ENCODE measurements at regions of chr2 and their contacts with region 1.

Region 1: DNA sequence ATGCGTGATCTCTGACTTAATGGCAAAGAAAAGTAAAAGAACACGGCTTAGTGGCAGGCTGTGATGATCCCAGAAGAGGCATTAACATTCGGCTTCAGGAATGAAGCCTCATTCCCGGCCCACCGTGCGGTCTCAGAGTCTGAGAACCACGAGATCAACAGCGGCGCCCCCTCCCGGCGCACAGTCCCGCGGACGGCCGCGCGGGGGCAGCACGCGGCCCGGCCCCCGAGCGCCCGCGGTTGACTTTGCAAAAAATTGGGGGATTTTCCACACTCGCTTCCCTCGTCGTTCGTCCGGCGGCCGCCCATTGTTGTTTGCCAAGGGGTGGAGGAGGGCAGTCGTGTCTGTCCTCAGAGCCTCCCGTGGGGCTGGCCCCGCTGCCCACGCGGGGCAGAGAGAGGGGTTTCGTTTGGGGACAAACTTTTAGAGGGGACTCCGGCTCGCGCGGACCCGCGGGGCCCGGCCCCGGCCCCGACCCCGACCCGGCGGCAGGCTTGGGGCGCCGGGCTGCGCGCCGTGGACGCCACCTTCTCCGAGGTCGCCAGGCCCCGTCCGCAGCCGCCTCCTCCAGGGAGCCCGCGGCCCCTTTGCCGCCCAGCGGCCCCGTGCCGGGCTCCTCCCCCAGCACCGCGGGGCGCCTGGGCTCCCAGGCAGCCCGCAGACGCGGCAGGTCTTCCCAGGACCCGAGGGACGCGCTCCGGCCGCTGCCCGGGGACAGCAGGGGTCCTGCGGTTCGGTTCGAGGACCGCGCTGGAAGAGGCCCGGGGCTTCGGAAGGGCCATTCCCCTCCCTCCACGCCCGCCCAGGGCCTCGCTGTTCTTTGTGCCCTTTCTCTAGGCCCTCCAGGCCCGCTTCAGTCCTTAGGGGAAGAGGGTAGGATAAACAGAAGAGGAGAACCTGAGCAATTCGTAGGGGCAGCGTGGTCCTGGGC is 3.4 kb upstream of the HS6ST1 start:
- DNase-seq: peak; percentile 84
- H3K4me3 Mint-ChIP-seq: peak overlapping the region; percentile 52
- H3K27ac Mint-ChIP-seq: no peak overlapping the region
- H3K4me1 Mint-ChIP-seq: peaks cover 11% of the 10 kb centered on the region
- H3K27me3 Mint-ChIP-seq: no peaks in the 10 kb centered on the region

Region 2: GRCh38 chr2:127857265-127857808 is 464.7 kb before region 1 on chr2:
- CTCF ChIA-PET with region 1: no interaction called
- intact Hi-C with region 1: loop called (anchors 10 kb)
- DNase-seq: peak; percentile 32
- H3K4me3 Mint-ChIP-seq: peak overlapping the region; percentile 99
- H3K27ac Mint-ChIP-seq: peak overlapping the region; percentile 91
- H3K4me1 Mint-ChIP-seq: peaks cover 53% of the 10 kb centered on the region
- H3K27me3 Mint-ChIP-seq: no peaks in the 10 kb centered on the region

Region 3: GRCh38 chr2:127984213-127984950 is 337.7 kb before region 1 on chr2:
- CTCF ChIA-PET with region 1: no interaction called
- intact Hi-C with region 1: no loop called
- DNase-seq: no peak
- H3K4me3 Mint-ChIP-seq: no peak overlapping the region
- H3K27ac Mint-ChIP-seq: no peak overlapping the region
- H3K4me1 Mint-ChIP-seq: no peaks in the 10 kb centered on the region
- H3K27me3 Mint-ChIP-seq: no peaks in the 10 kb centered on the region

Region 4: DNA sequence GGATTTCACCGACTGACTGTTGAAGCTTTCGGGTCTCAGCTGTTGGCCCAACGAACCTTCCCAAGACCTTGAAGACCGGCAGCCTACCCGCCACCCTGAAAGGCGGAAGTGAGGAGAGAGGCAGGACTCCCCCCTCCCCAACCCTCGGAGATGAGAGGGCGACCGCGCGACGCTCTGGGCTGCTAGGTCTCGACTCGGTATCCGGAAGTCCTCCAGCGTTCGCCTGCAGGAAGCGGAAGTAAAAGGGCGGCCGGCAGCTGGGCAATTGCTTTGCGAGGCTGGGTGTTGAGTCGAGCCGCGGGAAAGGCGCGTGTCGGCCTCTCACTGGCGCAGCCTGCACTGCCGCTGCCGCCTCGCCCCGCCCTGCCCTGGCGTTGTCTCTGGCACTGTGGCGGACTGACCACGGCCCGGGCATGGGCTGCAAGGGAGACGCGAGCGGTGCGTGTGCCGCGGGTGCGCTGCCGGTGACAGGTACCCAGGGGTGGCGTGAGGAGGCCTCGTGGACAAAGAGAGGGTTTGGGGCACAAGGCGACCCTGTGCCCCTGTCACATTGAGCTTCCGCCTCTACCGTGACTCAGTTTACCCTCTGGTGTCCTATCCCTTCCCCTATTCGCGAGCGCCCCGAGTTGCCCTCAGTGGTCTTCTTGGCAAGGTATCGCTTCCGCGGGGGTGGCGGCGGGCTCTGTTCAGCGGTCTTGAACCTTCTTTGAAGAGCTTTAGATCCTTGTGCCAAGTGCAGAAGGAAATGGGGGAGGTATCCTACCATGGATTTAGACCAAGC is 230.9 kb before region 1 on chr2 and contains the start of gene UGGT1:
- CTCF ChIA-PET with region 1: no interaction called
- intact Hi-C with region 1: loop called (anchors 2 kb)
- DNase-seq: peak; percentile 96
- H3K4me3 Mint-ChIP-seq: peak within 1 kb of the TSS; percentile 90
- H3K27ac Mint-ChIP-seq: peak within 1 kb of the TSS; percentile 86
- H3K4me1 Mint-ChIP-seq: peaks cover 42% of the 10 kb centered on the region
- H3K27me3 Mint-ChIP-seq: no peaks in the 10 kb centered on the region
- total RNA-seq, gene UGGT1: 37.3 to 40.1 TPM

Region 5: DNA sequence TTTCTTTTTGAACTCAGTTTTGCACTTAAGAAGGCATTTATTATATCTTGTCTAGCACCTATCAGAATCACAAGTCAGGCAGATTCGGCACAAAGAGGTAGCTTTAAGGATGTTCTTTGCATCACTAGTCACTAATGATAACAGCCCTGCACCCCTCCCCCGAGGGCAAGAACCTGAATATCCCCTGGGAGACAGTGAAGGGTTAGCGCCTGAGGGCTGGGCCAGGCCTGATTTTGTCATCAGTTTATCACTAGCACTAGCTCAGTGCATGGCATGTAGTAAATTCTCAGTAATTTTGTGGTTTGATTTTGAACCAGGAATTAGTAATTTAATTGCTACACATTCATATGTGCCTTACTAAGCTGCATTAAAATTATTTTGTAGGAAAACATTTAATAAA is 20.5 kb after region 1 on chr2:
- CTCF ChIA-PET with region 1: no interaction called
- intact Hi-C with region 1: no loop called
- DNase-seq: no peak
- H3K4me3 Mint-ChIP-seq: no peak overlapping the region
- H3K27ac Mint-ChIP-seq: no peak overlapping the region
- H3K4me1 Mint-ChIP-seq: no peaks in the 10 kb centered on the region
- H3K27me3 Mint-ChIP-seq: no peaks in the 10 kb centered on the region

Region 6: DNA sequence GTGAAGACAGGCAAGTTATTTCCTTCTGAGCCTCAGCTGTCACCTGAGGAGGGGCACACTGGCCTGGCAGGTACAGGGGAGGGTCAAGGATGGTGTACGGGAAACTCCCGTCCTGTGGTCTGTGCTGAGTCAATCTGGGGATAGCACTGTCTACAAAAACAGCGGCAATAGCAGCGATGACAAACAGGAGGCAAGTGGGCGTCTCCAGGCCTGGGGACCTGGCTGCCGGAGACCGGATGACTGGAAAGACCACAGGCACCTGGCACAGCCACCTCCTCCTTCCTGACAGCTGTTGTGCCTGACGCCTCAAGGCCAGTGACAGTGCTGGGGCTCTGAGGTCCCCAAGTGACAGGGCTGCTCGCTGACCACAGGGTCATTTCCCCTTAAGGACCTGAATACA is 198.7 kb after region 1 on chr2:
- CTCF ChIA-PET with region 1: no interaction called
- intact Hi-C with region 1: loop called (anchors 5 kb)
- DNase-seq: peak; percentile 75
- H3K4me3 Mint-ChIP-seq: no peak overlapping the region
- H3K27ac Mint-ChIP-seq: no peak overlapping the region
- H3K4me1 Mint-ChIP-seq: peaks cover 3% of the 10 kb centered on the region
- H3K27me3 Mint-ChIP-seq: peaks cover 4% of the 10 kb centered on the region

Region 7: GRCh38 chr2:128754246-128754724 is 432.2 kb after region 1 on chr2:
- CTCF ChIA-PET with region 1: no interaction called
- intact Hi-C with region 1: loop called (anchors 2 kb)
- DNase-seq: no peak
- H3K4me3 Mint-ChIP-seq: no peak overlapping the region
- H3K27ac Mint-ChIP-seq: no peak overlapping the region
- H3K4me1 Mint-ChIP-seq: peaks cover 2% of the 10 kb centered on the region
- H3K27me3 Mint-ChIP-seq: peaks cover 22% of the 10 kb centered on the region